ENCODE measurements at regions of chr12 and their contacts with region 1.

Region 1: GRCh38 chr12:55817346-55818139 is at the starts of genes ORMDL2 and SARNP:
- DNase-seq: peak; percentile 97 to 99
- H3K4me3 ChIP-seq: peak within 1 kb of the TSS; percentile 83
- H3K4me3 Mint-ChIP-seq: no peak within 1 kb of the TSS
- H3K27ac Mint-ChIP-seq: no peak within 1 kb of the TSS
- H3K4me1 ChIP-seq: peaks cover 7% of the 10 kb centered on the region; the same call in 1 of the 2 replicates
- H3K4me1 Mint-ChIP-seq: peaks cover 30% of the 10 kb centered on the region
- H3K27me3 ChIP-seq: no peaks in the 10 kb centered on the region
- H3K27me3 Mint-ChIP-seq: no peaks in the 10 kb centered on the region
- CTCF ChIP-seq: no peak
- total RNA-seq, gene ORMDL2: 44.0 and 48.3 TPM in 2 replicates
- total RNA-seq, gene SARNP: 70.9 and 77.6 TPM in 2 replicates

Region 2: GRCh38 chr12:55728939-55729823 is 88.4 kb before region 1 on chr12 and contains the start of gene CD63:
- CTCF ChIA-PET with region 1: interaction called, 6 read pairs
- POLR2A ChIA-PET with region 1: interaction called, 10 read pairs
- intact Hi-C with region 1: no loop called
- DNase-seq: peak; percentile 84 to 86
- H3K4me3 ChIP-seq: peak within 1 kb of the TSS; percentile 90
- H3K4me3 Mint-ChIP-seq: peak within 1 kb of the TSS; percentile 90
- H3K27ac Mint-ChIP-seq: peak within 1 kb of the TSS; percentile 93
- H3K4me1 ChIP-seq: peaks cover 16% of the 10 kb centered on the region
- H3K4me1 Mint-ChIP-seq: peaks cover 14% of the 10 kb centered on the region
- H3K27me3 ChIP-seq: no peaks in the 10 kb centered on the region
- H3K27me3 Mint-ChIP-seq: no peaks in the 10 kb centered on the region
- CTCF ChIP-seq: no peak
- total RNA-seq, gene CD63: 947 and 983 TPM in 2 replicates

Region 3: DNA sequence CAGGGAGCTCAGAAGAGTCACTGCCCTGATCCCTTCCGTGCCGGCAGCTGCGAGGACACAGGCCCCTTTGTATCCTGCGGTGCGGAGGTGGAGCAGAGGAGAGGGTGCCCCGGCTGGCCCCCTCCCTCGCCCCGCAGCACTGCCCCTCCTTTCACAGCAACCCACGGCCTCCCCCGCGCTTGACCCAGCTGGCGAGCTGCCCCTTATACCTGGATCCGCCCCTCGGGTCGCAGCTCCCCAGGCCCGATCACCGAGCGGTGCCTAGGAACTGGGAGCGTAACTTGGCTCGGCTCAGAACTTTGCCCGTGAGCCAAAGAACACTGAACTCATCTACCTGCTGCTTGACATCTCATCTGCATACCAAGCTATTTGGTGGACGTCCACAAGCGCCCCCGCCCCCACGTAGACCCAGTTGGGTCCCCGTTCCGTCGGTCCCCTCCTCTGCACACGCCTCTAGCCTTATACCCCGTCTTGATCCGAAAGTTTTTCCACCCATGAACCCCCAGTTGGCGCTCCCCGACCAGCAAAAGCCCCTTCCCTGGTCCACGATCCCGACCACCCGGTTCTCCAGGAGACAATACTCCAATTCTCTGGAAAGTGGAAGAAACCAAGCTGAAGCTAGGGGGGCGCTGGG is 12.5 kb after region 1 on chr12:
- CTCF ChIA-PET with region 1: interaction called, 17 read pairs
- POLR2A ChIA-PET with region 1: interaction called, 65 read pairs
- intact Hi-C with region 1: no loop called
- DNase-seq: peak; percentile 41 to 52
- H3K4me3 ChIP-seq: peak overlapping the region; percentile 76
- H3K4me3 Mint-ChIP-seq: peak overlapping the region; percentile 82
- H3K27ac Mint-ChIP-seq: peak overlapping the region; percentile 85
- H3K4me1 ChIP-seq: no peaks in the 10 kb centered on the region
- H3K4me1 Mint-ChIP-seq: peaks cover 12% of the 10 kb centered on the region
- H3K27me3 ChIP-seq: no peaks in the 10 kb centered on the region
- H3K27me3 Mint-ChIP-seq: no peaks in the 10 kb centered on the region
- CTCF ChIP-seq: no peak

Region 4: DNA sequence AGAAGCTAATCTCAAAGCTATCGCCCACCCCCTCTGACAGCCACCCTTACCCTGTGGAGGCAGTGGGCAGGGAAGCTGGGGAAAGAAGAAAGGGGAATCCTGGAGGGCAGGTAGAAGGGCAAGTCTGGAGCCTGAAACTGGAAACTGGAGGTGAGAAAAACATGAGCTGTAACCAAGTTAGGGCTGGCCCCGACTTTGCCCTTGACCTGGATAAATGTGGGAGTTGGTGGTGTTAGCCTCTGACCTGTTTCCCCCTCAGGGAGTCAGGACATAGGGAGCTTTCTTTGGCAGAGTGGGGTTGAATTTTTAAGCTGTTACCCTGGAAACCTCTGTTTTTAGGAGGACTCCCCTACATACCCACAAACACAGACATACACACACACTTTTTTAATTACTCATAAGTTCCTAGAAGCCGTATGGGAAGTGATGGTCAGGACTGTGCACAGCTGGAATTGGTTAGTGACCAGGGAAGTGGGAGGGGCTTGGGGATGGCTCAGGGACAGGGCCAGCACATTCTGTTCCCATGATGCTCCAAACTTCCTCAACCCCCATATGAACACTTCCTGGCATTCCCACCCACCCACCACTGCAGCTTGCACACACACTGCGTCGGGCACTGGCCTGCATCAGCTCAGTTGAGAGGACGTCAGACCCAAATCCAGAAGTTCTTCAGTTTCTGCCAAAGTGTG is 30.2 kb after region 1 on chr12:
- CTCF ChIA-PET with region 1: no interaction called
- POLR2A ChIA-PET with region 1: no interaction called
- intact Hi-C with region 1: no loop called
- DNase-seq: no peak
- H3K4me3 ChIP-seq: no peak overlapping the region
- H3K4me3 Mint-ChIP-seq: no peak overlapping the region
- H3K27ac Mint-ChIP-seq: no peak overlapping the region
- H3K4me1 ChIP-seq: peaks cover 5% of the 10 kb centered on the region
- H3K4me1 Mint-ChIP-seq: no peaks in the 10 kb centered on the region
- H3K27me3 ChIP-seq: no peaks in the 10 kb centered on the region
- H3K27me3 Mint-ChIP-seq: no peaks in the 10 kb centered on the region
- CTCF ChIP-seq: no peak